Naive thymus-derived CD4-positive, alpha-beta T cell (primary cell): ENCODE measurements at regions of chr1 and their contacts with region 1.

Region 1: DNA sequence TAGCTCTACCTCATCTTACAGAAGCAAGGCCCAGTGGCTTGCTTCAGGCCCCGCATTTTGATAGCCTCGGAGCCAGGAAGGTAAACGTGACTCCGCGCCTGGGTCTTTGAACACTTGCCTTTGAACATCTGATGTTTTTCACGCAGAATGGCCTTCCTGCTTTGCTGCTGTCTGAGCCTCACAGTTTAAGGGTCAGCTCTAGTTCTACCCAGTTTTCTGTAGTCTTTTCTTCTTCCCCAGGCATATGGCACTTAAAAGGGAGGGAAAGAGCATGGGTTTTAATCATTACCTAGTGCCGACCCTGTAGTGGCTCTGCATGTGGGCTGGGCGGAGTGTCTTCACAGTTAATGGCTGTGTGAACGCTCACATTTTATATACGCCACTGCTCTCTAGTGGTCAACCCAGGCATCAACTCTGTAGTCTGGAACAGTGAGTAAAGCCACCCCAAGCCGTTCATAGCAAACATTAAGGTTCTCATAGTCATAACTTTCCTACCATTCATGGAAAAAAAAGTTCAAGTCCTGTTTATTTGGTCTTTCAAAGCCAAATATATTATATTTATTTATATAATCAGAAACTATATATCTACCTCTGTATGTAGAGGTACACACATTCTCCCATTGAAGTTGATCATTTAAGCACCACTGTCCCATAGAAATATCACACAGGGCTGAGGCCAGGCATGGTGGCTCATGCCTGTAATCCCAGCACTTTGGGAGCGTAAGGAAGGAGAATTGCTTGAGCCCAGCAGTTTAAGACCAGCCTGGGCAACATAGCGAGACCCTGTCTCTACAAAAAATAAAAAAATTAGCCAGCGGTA is 78.1 kb downstream of the IER5 start:
- DNase-seq: peak; percentile 35 to 84 (median 78)
- ATAC-seq: peak; percentile 99
- H3K4me3 ChIP-seq: no peak overlapping the region
- H3K4me3 Mint-ChIP-seq: peak overlapping the region; percentile 58 to 85 (median 80)
- H3K27ac ChIP-seq: no peak overlapping the region
- H3K27ac Mint-ChIP-seq: peak overlapping the region in 8 of 9 donors; percentile 43 to 92 (median 76)
- H3K4me1 ChIP-seq: peaks cover 0 to 5% of the 10 kb centered on the region in 2 donors
- H3K4me1 Mint-ChIP-seq: peaks cover 4 to 10% (median 9%) of the 10 kb centered on the region in 7 donors
- H3K27me3 ChIP-seq: no peaks in the 10 kb centered on the region
- H3K27me3 Mint-ChIP-seq: peaks cover 0 to 32% (median 0%) of the 10 kb centered on the region in 5 donors

Region 2: GRCh38 chr1:180533266-180533987 is 633.2 kb before region 1 on chr1:
- CTCF ChIA-PET with region 1: no interaction called
- POLR2A ChIA-PET with region 1: no interaction called
- intact Hi-C with region 1: loop called (anchors 1 kb)
- DNase-seq: peak; percentile 21 to 65 (median 40)
- ATAC-seq: peak; percentile 81
- H3K4me3 ChIP-seq: no peak overlapping the region
- H3K4me3 Mint-ChIP-seq: no peak overlapping the region
- H3K27ac ChIP-seq: no peak overlapping the region
- H3K27ac Mint-ChIP-seq: no peak overlapping the region
- H3K4me1 ChIP-seq: no peaks in the 10 kb centered on the region
- H3K4me1 Mint-ChIP-seq: peaks cover 0 to 6% (median 0%) of the 10 kb centered on the region in 7 donors
- H3K27me3 ChIP-seq: peaks cover 0 to 4% of the 10 kb centered on the region in 2 donors
- H3K27me3 Mint-ChIP-seq: peaks cover 0 to 34% (median 0%) of the 10 kb centered on the region in 5 donors

Region 3: GRCh38 chr1:180881806-180882509 is 284.6 kb before region 1 on chr1:
- CTCF ChIA-PET with region 1: interaction called, 7 read pairs
- POLR2A ChIA-PET with region 1: no interaction called
- intact Hi-C with region 1: loop called (anchors 1 kb)
- DNase-seq: peak in 3 of 9 donors; percentile 5 to 19 (median 10)
- ATAC-seq: no peak
- H3K4me3 ChIP-seq: no peak overlapping the region
- H3K4me3 Mint-ChIP-seq: no peak overlapping the region
- H3K27ac ChIP-seq: no peak overlapping the region
- H3K27ac Mint-ChIP-seq: peak overlapping the region in 1 of 9 donors; percentile 15
- H3K4me1 ChIP-seq: no peaks in the 10 kb centered on the region
- H3K4me1 Mint-ChIP-seq: peaks cover 0 to 5% (median 0%) of the 10 kb centered on the region in 7 donors
- H3K27me3 ChIP-seq: no peaks in the 10 kb centered on the region
- H3K27me3 Mint-ChIP-seq: no peaks in the 10 kb centered on the region

Region 4: DNA sequence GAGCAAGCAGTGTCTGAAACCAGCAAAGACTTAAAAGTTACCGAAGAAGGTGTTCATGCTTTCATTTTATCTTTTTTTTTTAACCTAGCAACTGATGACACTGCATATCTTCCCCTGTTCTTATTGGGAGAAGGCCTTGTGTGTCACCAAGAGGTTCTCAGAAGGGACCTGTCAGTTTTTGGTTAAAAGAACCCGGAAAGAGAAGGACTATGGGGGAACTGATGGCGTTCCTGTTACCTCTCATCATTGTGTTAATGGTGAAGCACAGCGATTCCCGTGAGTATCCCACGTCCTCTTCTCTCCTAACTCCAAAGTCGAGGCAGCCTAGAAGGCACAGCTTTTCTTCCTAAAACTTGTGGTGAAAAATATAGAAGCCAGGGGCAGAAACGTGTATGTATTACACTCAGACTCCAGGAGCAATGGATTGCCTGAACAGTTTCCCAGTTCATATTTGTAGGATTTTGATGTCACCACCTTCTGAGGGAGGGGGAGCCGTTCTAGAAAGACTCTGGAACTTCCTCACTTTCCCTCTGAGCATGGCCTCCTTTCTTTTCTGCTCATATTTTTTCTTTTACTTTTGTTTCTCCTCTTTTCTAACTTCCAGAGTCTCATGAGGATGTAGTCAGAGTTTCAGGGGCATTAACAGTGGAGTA is 132.7 kb before region 1 on chr1 and contains the start of gene MR1:
- CTCF ChIA-PET with region 1: interaction called, 10 read pairs
- POLR2A ChIA-PET with region 1: interaction called, 3 read pairs
- intact Hi-C with region 1: loop called (anchors 1 kb)
- DNase-seq: peak in 8 of 9 donors; percentile 32 to 92 (median 88)
- ATAC-seq: peak; percentile 97
- H3K4me3 ChIP-seq: peak within 1 kb of the TSS; percentile 77
- H3K4me3 Mint-ChIP-seq: peak within 1 kb of the TSS; percentile 84 to 99 (median 97)
- H3K27ac ChIP-seq: peak within 1 kb of the TSS; percentile 95
- H3K27ac Mint-ChIP-seq: peak within 1 kb of the TSS; percentile 95 to 100 (median 98)
- H3K4me1 ChIP-seq: peaks cover 32 to 42% of the 10 kb centered on the region in 2 donors
- H3K4me1 Mint-ChIP-seq: peaks cover 39 to 69% (median 61%) of the 10 kb centered on the region in 7 donors
- H3K27me3 ChIP-seq: no peaks in the 10 kb centered on the region
- H3K27me3 Mint-ChIP-seq: peaks cover 0 to 6% (median 0%) of the 10 kb centered on the region in 5 donors
- total RNA-seq, gene MR1: 19.8 to 35.8 (median 29.7) TPM

Region 5: GRCh38 chr1:181152892-181153633 is 13.5 kb before region 1 on chr1:
- CTCF ChIA-PET with region 1: interaction called, 32 read pairs
- POLR2A ChIA-PET with region 1: interaction called, 84 read pairs
- intact Hi-C with region 1: loop called (anchors 1 kb)
- DNase-seq: no peak
- ATAC-seq: peak; percentile 58
- H3K4me3 ChIP-seq: no peak overlapping the region
- H3K4me3 Mint-ChIP-seq: no peak overlapping the region
- H3K27ac ChIP-seq: no peak overlapping the region
- H3K27ac Mint-ChIP-seq: peak overlapping the region in 1 of 9 donors; percentile 44
- H3K4me1 ChIP-seq: peaks cover 36 to 49% of the 10 kb centered on the region in 2 donors
- H3K4me1 Mint-ChIP-seq: peaks cover 37 to 75% (median 63%) of the 10 kb centered on the region in 7 donors
- H3K27me3 ChIP-seq: no peaks in the 10 kb centered on the region
- H3K27me3 Mint-ChIP-seq: peaks cover 0 to 27% (median 0%) of the 10 kb centered on the region in 5 donors

Region 6: DNA sequence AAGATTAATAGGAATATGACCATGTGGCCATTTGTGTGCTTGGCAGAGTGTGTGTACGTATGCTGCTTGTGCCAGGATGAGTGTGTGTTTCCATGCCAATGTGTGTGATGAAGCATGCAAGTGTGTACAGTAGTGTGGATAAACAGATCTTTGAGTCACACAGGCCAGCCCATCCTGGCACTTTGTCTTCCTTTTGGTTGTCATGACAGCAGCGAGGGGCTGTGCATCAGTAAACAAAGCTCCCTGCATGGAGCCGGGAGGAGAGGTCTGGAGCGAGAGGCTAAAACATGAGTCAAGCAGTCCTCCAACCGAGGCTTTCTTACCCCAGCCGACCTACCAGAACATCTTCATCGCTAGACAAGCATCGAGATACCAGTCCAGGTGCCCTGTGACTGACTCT is 538.0 kb after region 1 on chr1:
- CTCF ChIA-PET with region 1: no interaction called
- POLR2A ChIA-PET with region 1: no interaction called
- intact Hi-C with region 1: no loop called
- DNase-seq: no peak
- ATAC-seq: no peak
- H3K4me3 ChIP-seq: no peak overlapping the region
- H3K4me3 Mint-ChIP-seq: no peak overlapping the region
- H3K27ac ChIP-seq: no peak overlapping the region
- H3K27ac Mint-ChIP-seq: no peak overlapping the region
- H3K4me1 ChIP-seq: no peaks in the 10 kb centered on the region
- H3K4me1 Mint-ChIP-seq: peaks cover 0 to 5% (median 0%) of the 10 kb centered on the region in 7 donors
- H3K27me3 ChIP-seq: peaks cover 0 to 2% of the 10 kb centered on the region in 2 donors
- H3K27me3 Mint-ChIP-seq: peaks cover 0 to 60% (median 24%) of the 10 kb centered on the region in 5 donors